ENCODE measurements at regions of chr1 and their contacts with region 1.

Region 1: GRCh38 chr1:24744911-24745710 is at the start of gene CLIC4:
- DNase-seq: peak; percentile 97 to 100 (median 100)
- H3K4me3 ChIP-seq: peak within 1 kb of the TSS; percentile 68 to 95 (median 95)
- H3K4me3 Mint-ChIP-seq: peak within 1 kb of the TSS; percentile 90 to 95
- H3K27ac ChIP-seq: peak within 1 kb of the TSS; percentile 46 to 79
- H3K27ac Mint-ChIP-seq: peak within 1 kb of the TSS; percentile 81 to 94 (median 90)
- H3K4me1 ChIP-seq: peaks cover 17 to 37% of the 10 kb centered on the region in 2 donors
- H3K4me1 Mint-ChIP-seq: peaks cover 46% of the 10 kb centered on the region
- H3K27me3 ChIP-seq: no peaks in the 10 kb centered on the region
- H3K27me3 Mint-ChIP-seq: peaks cover 2 to 3% (median 2%) of the 10 kb centered on the region in 3 donors
- CTCF ChIP-seq: no peak
- polyA plus RNA-seq, gene CLIC4: 9.7 to 38.1 (median 24.6) TPM

Region 2: DNA sequence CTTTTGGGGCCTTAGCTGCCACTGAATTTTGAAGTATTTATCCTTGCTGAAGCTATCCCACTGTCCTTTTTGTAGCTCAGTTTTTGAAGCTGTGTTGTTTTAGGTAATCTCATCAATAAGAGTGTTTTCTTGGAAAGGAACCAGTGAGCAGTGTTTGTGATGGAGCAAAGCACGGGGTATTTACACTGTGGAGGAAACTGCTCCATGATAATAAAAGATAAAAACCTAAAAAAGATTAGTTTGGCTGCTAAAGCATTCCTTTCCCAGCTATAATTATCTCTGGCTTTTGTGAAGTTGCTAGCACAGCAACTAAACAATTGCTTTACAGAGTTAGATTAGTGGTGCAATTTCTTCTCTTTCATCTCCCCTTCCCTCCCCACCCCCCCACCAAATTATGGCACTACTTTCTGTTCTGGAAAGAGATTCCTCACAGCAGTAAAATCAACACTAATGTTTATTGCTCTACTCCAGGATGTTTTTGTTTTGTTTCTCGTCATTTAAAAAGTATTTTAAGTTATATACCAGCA is 80.5 kb before region 1 on chr1:
- intact Hi-C with region 1: no loop called
- DNase-seq: no peak
- H3K4me3 ChIP-seq: no peak overlapping the region
- H3K4me3 Mint-ChIP-seq: no peak overlapping the region
- H3K27ac ChIP-seq: no peak overlapping the region
- H3K27ac Mint-ChIP-seq: no peak overlapping the region
- H3K4me1 ChIP-seq: no peaks in the 10 kb centered on the region
- H3K4me1 Mint-ChIP-seq: no peaks in the 10 kb centered on the region
- H3K27me3 ChIP-seq: no peaks in the 10 kb centered on the region
- H3K27me3 Mint-ChIP-seq: no peaks in the 10 kb centered on the region
- CTCF ChIP-seq: no peak

Region 3: DNA sequence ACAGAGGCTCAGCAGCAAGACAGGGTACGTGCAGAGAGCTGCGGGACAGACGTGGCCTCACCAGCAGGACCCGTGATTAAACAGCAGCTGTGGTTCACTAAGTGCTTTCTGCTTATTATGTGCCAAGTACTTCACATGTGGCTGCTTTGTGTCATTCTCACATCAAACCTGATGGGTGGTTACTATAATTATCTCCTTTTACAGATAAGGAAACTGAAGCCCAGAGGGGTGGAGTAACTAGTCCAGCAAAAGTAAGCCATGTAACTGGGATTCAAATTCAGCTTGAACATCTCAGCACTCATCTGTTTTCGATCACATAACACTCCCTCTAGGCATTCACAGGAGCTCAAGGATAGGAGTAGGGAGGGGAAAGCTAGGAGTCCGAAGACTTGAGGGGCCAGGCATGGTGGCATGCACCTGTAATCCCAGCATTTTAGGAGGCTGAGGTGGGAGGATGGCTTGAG is 50.7 kb before region 1 on chr1:
- intact Hi-C with region 1: no loop called
- DNase-seq: no peak
- H3K4me3 ChIP-seq: no peak overlapping the region
- H3K4me3 Mint-ChIP-seq: no peak overlapping the region
- H3K27ac ChIP-seq: peak overlapping the region in 1 of 2 donors; percentile 20
- H3K27ac Mint-ChIP-seq: peak overlapping the region in 4 of 7 donors; percentile 52 to 78 (median 58)
- H3K4me1 ChIP-seq: peaks cover 30 to 32% of the 10 kb centered on the region in 2 donors
- H3K4me1 Mint-ChIP-seq: peaks cover 29% of the 10 kb centered on the region
- H3K27me3 ChIP-seq: no peaks in the 10 kb centered on the region
- H3K27me3 Mint-ChIP-seq: peaks cover 0 to 2% (median 0%) of the 10 kb centered on the region in 3 donors
- CTCF ChIP-seq: no peak

Region 4: GRCh38 chr1:24705260-24706073 is 39.6 kb before region 1 on chr1:
- intact Hi-C with region 1: loop called (anchors 5 kb)
- DNase-seq: peak; percentile 63 to 79 (median 75)
- H3K4me3 ChIP-seq: peak overlapping the region in 2 of 3 experiments; percentile 17 to 68
- H3K4me3 Mint-ChIP-seq: peak overlapping the region; percentile 59 to 83
- H3K27ac ChIP-seq: no peak overlapping the region
- H3K27ac Mint-ChIP-seq: peak overlapping the region; percentile 41 to 89 (median 70)
- H3K4me1 ChIP-seq: peaks cover 37 to 40% of the 10 kb centered on the region in 2 donors
- H3K4me1 Mint-ChIP-seq: peaks cover 38% of the 10 kb centered on the region
- H3K27me3 ChIP-seq: no peaks in the 10 kb centered on the region
- H3K27me3 Mint-ChIP-seq: no peaks in the 10 kb centered on the region
- CTCF ChIP-seq: no peak

Region 5: GRCh38 chr1:24878775-24879742 is 133.9 kb after region 1 on chr1:
- intact Hi-C with region 1: no loop called
- DNase-seq: no peak
- H3K4me3 ChIP-seq: no peak overlapping the region
- H3K4me3 Mint-ChIP-seq: no peak overlapping the region
- H3K27ac ChIP-seq: no peak overlapping the region
- H3K27ac Mint-ChIP-seq: no peak overlapping the region
- H3K4me1 ChIP-seq: no peaks in the 10 kb centered on the region
- H3K4me1 Mint-ChIP-seq: no peaks in the 10 kb centered on the region
- H3K27me3 ChIP-seq: no peaks in the 10 kb centered on the region
- H3K27me3 Mint-ChIP-seq: peaks cover 2 to 8% (median 6%) of the 10 kb centered on the region in 3 donors
- CTCF ChIP-seq: no peak

Region 6: DNA sequence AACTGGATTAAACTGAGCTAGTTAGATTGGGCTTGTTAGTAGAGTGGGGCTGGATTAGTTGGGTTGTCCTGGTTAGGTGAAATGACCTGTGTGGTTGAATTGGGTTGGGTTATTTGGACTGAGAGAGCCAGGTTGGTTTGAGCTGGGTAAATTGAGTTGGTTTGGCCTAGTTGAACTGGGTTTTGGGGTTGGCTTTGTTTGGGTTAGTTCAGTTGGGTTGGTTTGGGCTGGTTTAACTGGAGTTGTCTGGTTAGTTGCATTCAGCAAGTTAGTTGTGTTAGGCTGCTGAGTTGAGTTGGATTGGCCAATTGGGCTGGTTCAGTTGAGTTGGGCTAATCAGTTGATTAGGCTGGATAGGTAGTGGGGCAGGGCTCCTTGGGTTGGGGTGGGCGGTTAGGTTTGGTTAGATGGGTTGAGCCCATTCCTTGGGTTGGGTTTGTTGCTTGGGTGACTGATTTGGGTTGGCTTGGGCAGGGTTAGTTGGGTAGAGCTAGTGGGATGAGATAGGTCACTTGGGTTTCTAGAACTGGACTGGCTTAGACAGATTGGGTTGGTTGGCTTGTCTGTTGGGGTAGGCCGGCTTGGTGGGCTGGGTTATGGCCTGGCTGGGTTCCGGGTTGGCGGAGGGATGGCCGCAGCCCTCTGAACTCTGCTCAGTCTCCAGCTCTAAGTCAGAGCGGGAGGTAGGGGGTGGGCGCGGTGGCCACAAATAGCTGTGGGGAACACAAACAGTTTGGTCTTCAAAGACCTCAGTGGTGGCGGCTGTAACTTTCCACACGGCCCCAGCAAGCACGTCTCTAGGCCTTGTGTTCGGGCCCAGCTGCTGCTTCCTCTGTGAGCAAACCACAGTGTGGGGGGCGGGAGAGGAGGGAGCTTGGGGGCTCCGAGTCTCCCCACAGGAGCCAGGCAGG is 252.1 kb after region 1 on chr1:
- intact Hi-C with region 1: no loop called
- DNase-seq: no peak
- H3K4me3 ChIP-seq: no peak overlapping the region
- H3K4me3 Mint-ChIP-seq: no peak overlapping the region
- H3K27ac ChIP-seq: no peak overlapping the region
- H3K27ac Mint-ChIP-seq: peak overlapping the region in 3 of 7 donors; percentile 2 to 26 (median 6)
- H3K4me1 ChIP-seq: peaks cover 9% of the 10 kb centered on the region in 2 donors
- H3K4me1 Mint-ChIP-seq: peaks cover 21% of the 10 kb centered on the region
- H3K27me3 ChIP-seq: no peaks in the 10 kb centered on the region
- H3K27me3 Mint-ChIP-seq: peaks cover 6 to 13% (median 9%) of the 10 kb centered on the region in 3 donors
- CTCF ChIP-seq: no peak